Sigmoid colon (tissue), 7 donors: ENCODE measurements at regions of chr10 and their contacts with region 1.

Region 1: DNA sequence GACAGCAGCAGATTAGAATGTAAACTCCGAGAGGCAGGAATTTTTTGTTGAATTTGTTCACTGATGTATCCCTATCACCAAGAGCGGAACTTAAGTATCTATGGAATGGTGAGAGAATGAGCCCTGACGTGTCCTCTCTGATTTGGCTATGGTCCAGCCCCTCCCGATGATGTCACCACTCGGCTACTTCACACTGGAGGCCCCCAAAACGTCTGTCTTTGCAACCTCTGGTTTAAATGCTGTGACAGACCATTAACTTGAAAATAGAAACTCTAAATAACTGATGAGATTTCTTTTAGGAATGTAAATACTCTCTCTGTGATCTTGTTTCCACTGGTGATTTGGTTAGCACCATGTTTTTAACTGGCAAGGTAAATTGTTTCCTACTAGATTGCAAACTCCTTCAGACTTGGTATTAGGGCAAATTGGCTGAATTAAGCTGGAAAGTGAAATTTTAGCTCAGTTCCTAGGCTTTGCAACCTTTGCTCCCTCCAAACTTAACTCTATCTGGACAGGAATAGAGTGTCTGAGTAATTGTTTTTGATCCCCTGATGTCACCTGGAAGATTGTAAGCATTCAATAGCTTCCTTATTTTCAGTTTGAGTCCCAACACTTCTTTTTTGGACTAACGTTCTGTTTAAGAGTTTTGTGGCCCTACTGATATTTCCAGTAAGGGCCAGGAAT is 19.1 kb downstream of the SLC16A12 start:
- DNase-seq: peak; percentile 80
- H3K4me3 ChIP-seq: no peak overlapping the region
- H3K27ac ChIP-seq: peak overlapping the region; percentile 4 to 73 (median 62)
- H3K4me1 ChIP-seq: peaks cover 0 to 29% (median 16%) of the 10 kb centered on the region in 4 donors
- H3K27me3 ChIP-seq: no peaks in the 10 kb centered on the region
- CTCF ChIP-seq: no peak
- EP300 ChIP-seq: no peak
- POLR2A ChIP-seq: no peak

Region 2: DNA sequence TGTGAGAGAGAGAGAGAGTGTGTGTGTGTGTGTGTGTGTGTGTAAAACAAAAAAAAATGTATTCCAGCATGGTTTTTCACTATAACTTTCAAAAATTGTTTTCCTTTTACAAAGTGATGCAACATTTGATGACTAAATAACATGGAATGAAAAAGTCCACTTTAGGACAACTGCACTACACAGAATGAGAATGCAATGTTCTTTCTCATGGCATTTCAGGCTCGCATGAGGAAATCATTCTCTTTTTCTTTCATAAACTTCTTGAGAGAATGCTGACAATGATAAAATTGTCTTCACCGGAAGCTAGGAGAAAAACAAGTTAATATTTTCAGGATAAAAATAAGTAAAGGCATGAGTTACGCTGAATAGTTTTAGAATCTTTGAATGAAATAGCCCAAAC is 34.6 kb before region 1 on chr10:
- intact Hi-C with region 1: loop called (anchors 5 kb)
- DNase-seq: no peak
- H3K4me3 ChIP-seq: no peak overlapping the region
- H3K27ac ChIP-seq: peak overlapping the region; percentile 65 to 82 (median 78)
- H3K4me1 ChIP-seq: peaks cover 0 to 58% (median 53%) of the 10 kb centered on the region in 4 donors
- H3K27me3 ChIP-seq: no peaks in the 10 kb centered on the region
- CTCF ChIP-seq: no peak
- EP300 ChIP-seq: peak; percentile 33 to 97 (median 89)
- POLR2A ChIP-seq: no peak